Right ventricle myocardium superior (tissue), 1 donor: ENCODE measurements at regions of chr9 and their contacts with region 1.

Region 1: DNA sequence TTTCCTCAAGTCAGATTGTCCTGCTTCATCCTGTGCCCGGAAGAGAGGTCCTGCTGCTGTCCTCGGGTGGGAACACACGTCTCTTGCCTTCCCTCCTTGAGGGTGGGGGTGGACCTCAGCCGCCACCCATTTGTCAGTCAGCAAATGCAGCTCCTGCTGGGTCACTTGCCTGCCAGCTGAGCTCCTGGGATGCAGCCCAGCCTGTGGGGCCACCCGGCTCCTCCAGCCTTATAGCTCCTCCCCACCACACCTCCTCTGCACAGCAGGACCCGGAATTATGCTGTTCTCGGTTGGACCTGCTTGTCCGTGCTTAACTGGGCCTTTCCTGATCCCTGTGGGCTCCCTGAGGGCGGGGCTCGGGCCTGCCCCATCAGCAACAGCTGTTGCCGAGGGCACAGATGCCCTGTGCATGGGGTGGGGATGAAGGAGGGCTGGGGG is 52.7 kb downstream of the RXRA start:
- DNase-seq: peak; percentile 82
- ATAC-seq: peak; percentile 15

Region 2: GRCh38 chr9:134401391-134401790 is 22.5 kb after region 1 on chr9:
- intact Hi-C with region 1: loop called (anchors 1 kb)
- DNase-seq: no peak
- ATAC-seq: no peak

Region 3: GRCh38 chr9:134422301-134423090 is 43.6 kb after region 1 on chr9:
- intact Hi-C with region 1: no loop called
- DNase-seq: no peak
- ATAC-seq: peak; percentile 49

Region 4: GRCh38 chr9:134434894-134435506 is 56.1 kb after region 1 on chr9:
- intact Hi-C with region 1: loop called (anchors 10 kb)
- DNase-seq: peak; percentile 97
- ATAC-seq: peak; percentile 87